ENCODE measurements at regions of chr4 and their contacts with region 1.

Region 1: DNA sequence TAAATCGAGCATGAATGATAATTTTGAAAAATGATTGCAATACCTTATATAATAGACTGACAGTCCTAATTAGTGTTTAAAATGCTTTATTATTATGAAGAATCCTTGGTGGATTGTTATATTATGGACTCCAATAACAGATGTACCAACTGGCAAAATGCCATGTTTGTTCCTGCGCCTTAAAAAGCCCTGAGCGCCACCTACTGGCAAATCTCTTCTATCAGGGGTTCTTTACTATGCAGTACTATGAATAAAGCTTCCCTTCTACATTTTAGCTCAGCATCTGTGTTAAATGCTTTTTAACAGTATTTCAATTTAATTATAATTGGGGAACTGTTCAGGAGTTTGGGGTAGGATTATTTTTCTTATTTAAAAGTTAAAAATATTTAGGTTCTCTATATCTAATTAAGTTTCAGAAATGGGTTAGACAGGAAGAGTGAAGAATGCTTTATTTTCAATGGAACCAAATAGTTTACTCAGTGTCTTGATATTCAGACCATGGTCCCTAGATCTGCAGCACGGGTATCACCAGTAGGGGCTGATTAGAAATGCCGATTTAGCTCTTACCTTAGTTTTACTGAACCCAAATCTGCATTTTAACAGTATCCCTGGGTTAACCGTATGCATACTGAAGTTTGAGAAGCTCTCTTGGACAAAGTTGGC is 20.1 kb downstream of the CFAP97 start:
- DNase-seq: peak; percentile 86
- ATAC-seq: peak; percentile 65
- H3K4me3 Mint-ChIP-seq: no peak overlapping the region
- H3K27ac Mint-ChIP-seq: no peak overlapping the region
- H3K4me1 Mint-ChIP-seq: peaks cover 34% of the 10 kb centered on the region
- H3K27me3 Mint-ChIP-seq: no peaks in the 10 kb centered on the region

Region 2: DNA sequence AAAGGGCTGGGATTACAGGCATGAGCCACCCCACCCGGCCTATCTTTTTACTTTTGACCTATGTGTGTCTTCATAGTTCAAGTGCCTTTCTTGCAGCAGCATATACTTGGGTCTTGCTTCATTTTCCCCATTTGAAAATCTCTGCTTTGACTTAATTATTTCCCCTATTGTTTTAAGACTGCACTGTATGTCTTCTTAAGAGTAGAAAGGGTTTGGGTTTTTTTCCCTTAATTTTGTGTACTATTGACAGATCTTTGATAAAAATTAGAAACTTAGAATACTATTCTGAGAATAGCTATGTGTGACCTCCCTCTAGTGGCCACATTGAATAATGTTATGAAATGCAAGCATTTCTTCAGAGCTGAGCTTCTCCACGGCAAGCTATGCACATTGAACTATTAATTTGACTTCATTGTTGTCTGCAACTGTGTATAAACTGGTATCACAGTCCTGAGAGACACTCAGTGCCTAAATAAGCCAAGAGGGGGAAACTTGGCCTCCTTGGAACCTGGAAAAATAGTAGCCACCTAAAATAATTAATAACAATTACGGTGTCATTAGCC is 49.4 kb before region 1 on chr4:
- CTCF ChIA-PET with region 1: interaction called, 13 read pairs
- POLR2A ChIA-PET with region 1: no interaction called
- intact Hi-C with region 1: no loop called
- DNase-seq: no peak
- ATAC-seq: peak; percentile 70
- H3K4me3 Mint-ChIP-seq: no peak overlapping the region
- H3K27ac Mint-ChIP-seq: no peak overlapping the region
- H3K4me1 Mint-ChIP-seq: no peaks in the 10 kb centered on the region
- H3K27me3 Mint-ChIP-seq: peaks cover 28% of the 10 kb centered on the region

Region 3: DNA sequence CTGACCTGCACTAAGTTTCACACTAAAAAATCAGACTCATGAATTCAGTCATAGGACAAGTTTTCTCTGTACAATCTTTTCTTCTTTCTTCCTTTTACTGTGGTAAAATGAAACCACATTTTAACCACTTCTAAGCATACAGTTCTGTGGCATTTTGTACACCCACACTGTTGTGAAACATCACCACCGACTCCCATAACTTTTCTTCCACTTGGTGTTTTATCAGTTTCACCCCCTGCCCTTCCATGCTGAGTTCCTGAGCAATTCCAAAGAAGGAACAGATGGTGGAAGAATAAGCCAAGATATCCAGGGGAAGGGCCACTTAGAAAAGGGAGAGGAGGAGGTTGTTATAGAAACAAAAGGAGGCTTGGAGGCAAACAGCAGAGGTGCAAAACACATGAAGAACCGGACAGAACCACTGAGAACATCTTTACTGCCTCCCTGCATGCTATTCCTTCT is 18.1 kb before region 1 on chr4:
- CTCF ChIA-PET with region 1: interaction called, 10 read pairs
- POLR2A ChIA-PET with region 1: interaction called, 7 read pairs
- intact Hi-C with region 1: no loop called
- DNase-seq: peak; percentile 21
- ATAC-seq: peak; percentile 86
- H3K4me3 Mint-ChIP-seq: peak overlapping the region; percentile 6
- H3K27ac Mint-ChIP-seq: no peak overlapping the region
- H3K4me1 Mint-ChIP-seq: peaks cover 22% of the 10 kb centered on the region
- H3K27me3 Mint-ChIP-seq: peaks cover 6% of the 10 kb centered on the region

Region 4: GRCh38 chr4:185171373-185172071 is 12.2 kb before region 1 on chr4:
- CTCF ChIA-PET with region 1: interaction called, 30 read pairs
- POLR2A ChIA-PET with region 1: no interaction called
- intact Hi-C with region 1: no loop called
- DNase-seq: no peak
- ATAC-seq: no peak
- H3K4me3 Mint-ChIP-seq: no peak overlapping the region
- H3K27ac Mint-ChIP-seq: no peak overlapping the region
- H3K4me1 Mint-ChIP-seq: peaks cover 4% of the 10 kb centered on the region
- H3K27me3 Mint-ChIP-seq: peaks cover 3% of the 10 kb centered on the region

Region 5: GRCh38 chr4:185196437-185196836 is 12.7 kb after region 1 on chr4:
- CTCF ChIA-PET with region 1: interaction called, 20 read pairs
- POLR2A ChIA-PET with region 1: no interaction called
- intact Hi-C with region 1: no loop called
- DNase-seq: no peak
- ATAC-seq: no peak
- H3K4me3 Mint-ChIP-seq: no peak overlapping the region
- H3K27ac Mint-ChIP-seq: no peak overlapping the region
- H3K4me1 Mint-ChIP-seq: peaks cover 30% of the 10 kb centered on the region
- H3K27me3 Mint-ChIP-seq: no peaks in the 10 kb centered on the region

Region 6: DNA sequence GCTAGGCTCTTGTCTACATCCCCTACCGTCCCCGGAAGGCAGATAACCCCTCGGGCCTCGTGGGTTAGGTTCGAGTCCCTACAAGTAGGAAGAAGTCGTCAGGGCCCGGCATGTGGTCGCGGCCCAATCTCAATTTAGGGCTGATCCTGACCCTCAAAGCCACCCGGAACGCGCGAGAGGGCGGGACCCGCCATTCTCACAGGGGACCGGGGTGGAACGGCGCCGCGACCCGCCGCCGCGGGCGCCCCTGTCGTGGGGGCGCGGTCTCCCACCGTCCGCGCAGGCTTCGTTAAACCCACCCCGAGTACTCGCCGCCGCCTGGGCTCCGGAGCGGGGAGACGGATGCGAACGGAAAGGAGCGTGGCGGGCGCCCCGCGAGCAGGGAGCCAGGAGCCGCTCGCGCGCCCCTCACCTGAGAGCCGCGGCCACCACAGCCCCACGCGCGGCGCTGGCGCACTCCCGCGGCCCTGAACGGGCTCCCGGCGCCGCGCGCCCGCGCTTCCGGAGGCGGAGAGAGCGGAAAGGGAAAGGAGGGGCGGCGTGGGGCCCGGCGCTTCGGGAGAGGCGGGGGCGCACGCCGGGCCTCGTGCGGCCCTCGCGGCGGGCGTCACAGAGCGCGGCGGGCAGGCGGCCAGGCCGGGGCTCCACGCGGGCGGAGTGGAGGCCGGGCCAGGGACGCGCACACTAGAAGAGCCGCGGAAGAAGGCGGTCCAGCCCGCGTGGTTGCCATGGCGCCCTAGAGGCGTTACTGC is 19.9 kb after region 1 on chr4 and contains the start of gene CFAP97:
- CTCF ChIA-PET with region 1: interaction called, 20 read pairs
- POLR2A ChIA-PET with region 1: no interaction called
- intact Hi-C with region 1: no loop called
- DNase-seq: peak; percentile 82
- ATAC-seq: peak; percentile 85
- H3K4me3 Mint-ChIP-seq: peak within 1 kb of the TSS; percentile 94
- H3K27ac Mint-ChIP-seq: peak within 1 kb of the TSS; percentile 97
- H3K4me1 Mint-ChIP-seq: peaks cover 41% of the 10 kb centered on the region
- H3K27me3 Mint-ChIP-seq: no peaks in the 10 kb centered on the region
- total RNA-seq, gene CFAP97: 54.6 to 81.8 TPM

Region 7: GRCh38 chr4:185304944-185305690 is 121.4 kb after region 1 on chr4:
- CTCF ChIA-PET with region 1: no interaction called
- POLR2A ChIA-PET with region 1: no interaction called
- intact Hi-C with region 1: loop called in 1 of 2 experiments (anchors 5 kb)
- DNase-seq: peak; percentile 34
- ATAC-seq: peak; percentile 84
- H3K4me3 Mint-ChIP-seq: no peak overlapping the region
- H3K27ac Mint-ChIP-seq: no peak overlapping the region
- H3K4me1 Mint-ChIP-seq: no peaks in the 10 kb centered on the region
- H3K27me3 Mint-ChIP-seq: no peaks in the 10 kb centered on the region

Measured in activated CD4-positive, alpha-beta T cell treated with anti-CD3 and anti-CD28 coated beads for 36 hours (primary cell).